Prostate gland (tissue), 2 donors: ENCODE measurements at regions of chr16 and their contacts with region 1.

Region 1: DNA sequence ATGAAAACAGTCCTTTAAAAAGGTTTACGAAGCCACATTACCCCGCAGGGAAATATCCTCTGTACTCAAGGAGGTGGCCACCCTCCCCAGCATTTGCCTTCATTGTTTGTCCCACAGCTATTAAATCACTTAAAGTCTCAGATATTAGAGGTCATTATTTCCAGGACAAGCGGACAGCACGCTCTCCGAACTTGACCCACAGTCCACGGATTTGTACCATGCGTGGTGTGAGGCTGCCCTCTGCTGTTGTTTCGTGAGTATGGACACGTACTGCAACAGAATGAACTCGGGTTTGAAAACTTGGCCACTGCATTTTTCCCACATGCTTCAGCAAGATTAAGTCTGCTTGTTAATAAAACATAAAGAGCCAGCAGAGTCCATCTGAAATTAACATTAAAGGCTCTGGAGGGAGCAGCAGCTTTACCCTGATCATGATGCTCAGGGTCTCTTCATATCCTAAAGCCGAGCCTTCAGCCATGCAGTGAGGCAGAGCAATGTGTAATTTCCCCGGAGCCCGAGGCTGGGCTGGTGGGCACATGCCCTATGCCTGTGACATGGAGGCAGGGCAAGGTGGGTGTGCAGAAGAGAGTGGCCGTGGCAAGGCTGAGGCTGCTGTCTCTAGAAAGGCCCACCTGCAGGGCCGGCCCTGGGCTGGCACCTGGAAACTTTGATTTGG is 19.7 kb downstream of the MEAK7 start:
- DNase-seq: peak; percentile 65
- H3K4me3 ChIP-seq: no peak overlapping the region
- H3K27ac ChIP-seq: no peak overlapping the region
- H3K4me1 ChIP-seq: no peaks in the 10 kb centered on the region
- H3K27me3 ChIP-seq: no peaks in the 10 kb centered on the region
- CTCF ChIP-seq: peak; percentile 64 to 95 (median 82)
- POLR2A ChIP-seq: no peak

Region 2: DNA sequence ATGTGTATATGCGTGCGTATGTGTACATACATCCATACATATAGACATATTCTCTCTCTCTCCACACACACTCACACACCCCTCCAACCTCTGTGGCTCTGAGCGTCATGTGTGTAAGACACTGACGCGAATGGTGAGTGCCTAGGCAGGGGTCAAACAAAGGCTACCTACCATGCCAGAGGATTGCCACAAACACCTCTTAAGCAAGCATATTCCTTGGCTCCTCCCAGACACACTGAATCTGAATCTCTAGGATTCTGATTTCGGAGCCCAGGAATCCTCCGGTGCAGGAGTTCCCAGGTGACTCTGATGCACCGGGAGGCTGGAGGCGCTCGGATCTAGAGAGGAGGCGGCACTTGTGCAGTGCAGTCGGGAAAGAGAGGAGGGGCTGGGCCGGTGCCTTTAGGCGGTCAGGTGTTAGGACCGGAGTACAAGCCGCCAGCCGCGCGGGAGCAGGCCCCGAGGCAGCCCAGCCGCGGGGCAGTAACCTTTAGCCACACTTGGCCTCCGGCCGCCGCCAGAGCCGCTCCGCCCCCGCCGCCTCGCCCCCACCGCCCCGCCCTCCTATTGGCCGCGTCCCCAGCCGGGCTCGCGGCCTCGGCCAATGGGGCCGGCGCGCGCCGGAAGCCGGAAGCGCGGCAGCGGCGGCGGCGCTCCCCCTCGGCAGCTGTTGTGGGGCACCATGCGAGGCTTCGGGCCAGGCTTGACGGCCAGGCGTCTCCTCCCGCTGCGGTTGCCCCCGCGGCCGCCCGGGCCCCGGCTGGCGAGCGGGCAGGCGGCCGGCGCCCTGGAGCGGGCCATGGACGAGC is 586.0 kb before region 1 on chr16 and contains the start of gene MLYCD:
- intact Hi-C with region 1: no loop called
- DNase-seq: peak; percentile 71
- H3K4me3 ChIP-seq: peak within 1 kb of the TSS; percentile 81 to 87
- H3K27ac ChIP-seq: peak within 1 kb of the TSS; percentile 67 to 85
- H3K4me1 ChIP-seq: peaks cover 7% of the 10 kb centered on the region
- H3K27me3 ChIP-seq: no peaks in the 10 kb centered on the region
- CTCF ChIP-seq: no peak
- POLR2A ChIP-seq: no peak
- total RNA-seq, gene MLYCD: 6.5 to 16.7 TPM

Region 3: GRCh38 chr16:83967806-83968305 is 516.9 kb before region 1 on chr16 and contains the start of gene NECAB2:
- intact Hi-C with region 1: loop called (anchors 10 kb)
- DNase-seq: no peak
- H3K4me3 ChIP-seq: peak within 1 kb of the TSS; percentile 29 to 31
- H3K27ac ChIP-seq: no peak within 1 kb of the TSS
- H3K4me1 ChIP-seq: no peaks in the 10 kb centered on the region
- H3K27me3 ChIP-seq: no peaks in the 10 kb centered on the region
- CTCF ChIP-seq: peak; percentile 24 to 67 (median 56)
- POLR2A ChIP-seq: no peak
- total RNA-seq, gene NECAB2: 2.8 TPM in 1 of 2 donors, not detected in the other

Region 4: GRCh38 chr16:84084570-84085270 is 400.0 kb before region 1 on chr16:
- intact Hi-C with region 1: loop called (anchors 10 kb)
- DNase-seq: peak; percentile 74
- H3K4me3 ChIP-seq: no peak overlapping the region
- H3K27ac ChIP-seq: peak overlapping the region in 1 of 2 donors; percentile 3
- H3K4me1 ChIP-seq: peaks cover 4% of the 10 kb centered on the region
- H3K27me3 ChIP-seq: no peaks in the 10 kb centered on the region
- CTCF ChIP-seq: peak in 3 of 4 experiments; percentile 66 to 80 (median 69)
- POLR2A ChIP-seq: no peak

Region 5: GRCh38 chr16:84186685-84187437 is 297.9 kb before region 1 on chr16 and contains the start of gene TAF1C:
- intact Hi-C with region 1: loop called (anchors 5 kb)
- DNase-seq: peak; percentile 89
- H3K4me3 ChIP-seq: peak within 1 kb of the TSS; percentile 74 to 83
- H3K27ac ChIP-seq: peak within 1 kb of the TSS; percentile 50 to 54
- H3K4me1 ChIP-seq: no peaks in the 10 kb centered on the region
- H3K27me3 ChIP-seq: no peaks in the 10 kb centered on the region
- CTCF ChIP-seq: peak; percentile 98 to 99 (median 98)
- POLR2A ChIP-seq: peak; percentile 33
- total RNA-seq, gene TAF1C: 53.4 to 87.9 TPM

Region 6: DNA sequence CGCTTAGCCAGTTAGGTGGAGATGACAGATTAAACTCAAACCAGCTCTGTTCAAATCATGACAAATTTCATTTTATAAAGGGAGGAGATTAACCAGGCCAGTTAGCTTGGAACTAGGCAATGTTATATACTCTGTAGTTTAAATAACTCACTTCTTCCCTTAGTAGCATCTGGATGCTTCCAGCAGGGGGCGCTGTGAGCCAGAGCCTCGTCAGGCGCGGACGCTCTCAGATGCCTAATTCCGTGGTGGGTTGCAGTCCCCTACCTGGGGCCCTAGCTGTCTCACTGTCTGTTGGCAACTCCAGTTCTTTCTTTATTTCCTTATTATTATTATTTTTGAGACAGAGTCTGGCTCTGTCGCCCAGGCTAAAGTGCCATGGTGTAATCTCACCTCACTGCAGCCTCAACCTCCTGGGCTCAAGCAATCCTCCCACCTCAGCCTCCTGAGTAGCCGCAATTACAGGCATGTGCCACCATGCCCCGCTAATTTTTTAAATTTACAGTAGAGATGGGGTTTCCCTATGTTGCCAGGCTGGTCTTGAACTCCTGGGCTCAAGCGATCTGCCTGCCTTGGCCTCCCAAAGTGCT is 207.4 kb before region 1 on chr16:
- intact Hi-C with region 1: loop called (anchors 2 kb)
- DNase-seq: peak; percentile 67
- H3K4me3 ChIP-seq: no peak overlapping the region
- H3K27ac ChIP-seq: no peak overlapping the region
- H3K4me1 ChIP-seq: no peaks in the 10 kb centered on the region
- H3K27me3 ChIP-seq: no peaks in the 10 kb centered on the region
- CTCF ChIP-seq: peak; percentile 78 to 89 (median 84)
- POLR2A ChIP-seq: no peak

Region 7: GRCh38 chr16:84532855-84533486 is 48.3 kb after region 1 on chr16:
- intact Hi-C with region 1: no loop called
- DNase-seq: no peak
- H3K4me3 ChIP-seq: no peak overlapping the region
- H3K27ac ChIP-seq: peak overlapping the region; percentile 59
- H3K4me1 ChIP-seq: peaks cover under 1% of the 10 kb centered on the region
- H3K27me3 ChIP-seq: no peaks in the 10 kb centered on the region
- CTCF ChIP-seq: no peak
- POLR2A ChIP-seq: no peak

Region 8: GRCh38 chr16:84544031-84544773 is 59.5 kb after region 1 on chr16:
- intact Hi-C with region 1: no loop called
- DNase-seq: no peak
- H3K4me3 ChIP-seq: no peak overlapping the region
- H3K27ac ChIP-seq: no peak overlapping the region
- H3K4me1 ChIP-seq: peaks cover 2% of the 10 kb centered on the region
- H3K27me3 ChIP-seq: no peaks in the 10 kb centered on the region
- CTCF ChIP-seq: no peak
- POLR2A ChIP-seq: no peak

Region 9: GRCh38 chr16:84774810-84775209 is 290.1 kb after region 1 on chr16:
- intact Hi-C with region 1: no loop called
- DNase-seq: no peak
- H3K4me3 ChIP-seq: no peak overlapping the region
- H3K27ac ChIP-seq: peak overlapping the region; percentile 65 to 72
- H3K4me1 ChIP-seq: no peaks in the 10 kb centered on the region
- H3K27me3 ChIP-seq: no peaks in the 10 kb centered on the region
- CTCF ChIP-seq: no peak
- POLR2A ChIP-seq: no peak